ENCODE measurements at regions of chr1 and their contacts with region 1.

Region 1: DNA sequence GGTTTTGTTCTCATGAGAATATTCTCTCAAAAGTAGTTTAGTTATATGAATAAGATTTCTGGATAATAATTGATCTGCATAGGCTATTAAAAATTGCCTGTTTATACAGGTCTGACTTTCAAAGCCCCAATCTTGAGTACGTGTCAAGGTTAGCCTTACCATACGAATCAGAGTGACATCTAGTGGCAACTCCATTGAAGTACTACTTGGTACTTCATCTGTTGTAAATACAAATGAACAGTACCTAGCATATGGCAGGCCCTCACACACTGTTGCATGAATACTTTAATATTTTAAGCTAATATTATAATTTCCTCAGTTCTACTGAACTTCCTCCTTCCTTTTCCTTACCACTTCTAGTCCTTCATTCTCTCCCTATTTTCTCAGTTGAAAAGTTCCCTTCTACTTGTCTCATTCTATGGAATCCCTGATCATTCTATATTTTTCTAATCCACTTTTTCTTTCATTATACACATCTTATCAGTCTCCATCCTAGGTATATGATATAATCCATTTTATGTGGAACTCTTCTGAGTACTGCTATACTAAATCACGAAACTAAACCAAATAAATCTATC is 101.2 kb downstream of the AKT3 start:
- DNase-seq: no peak
- H3K4me3 Mint-ChIP-seq: no peak overlapping the region
- H3K27ac Mint-ChIP-seq: no peak overlapping the region
- H3K4me1 Mint-ChIP-seq: no peaks in the 10 kb centered on the region
- H3K27me3 Mint-ChIP-seq: no peaks in the 10 kb centered on the region

Region 2: GRCh38 chr1:243482141-243483022 is 266.4 kb before region 1 on chr1:
- intact Hi-C with region 1: loop called (anchors 5 kb)
- DNase-seq: no peak
- H3K4me3 Mint-ChIP-seq: peak overlapping the region; percentile 26
- H3K27ac Mint-ChIP-seq: no peak overlapping the region
- H3K4me1 Mint-ChIP-seq: peaks cover 14% of the 10 kb centered on the region
- H3K27me3 Mint-ChIP-seq: no peaks in the 10 kb centered on the region

Region 3: DNA sequence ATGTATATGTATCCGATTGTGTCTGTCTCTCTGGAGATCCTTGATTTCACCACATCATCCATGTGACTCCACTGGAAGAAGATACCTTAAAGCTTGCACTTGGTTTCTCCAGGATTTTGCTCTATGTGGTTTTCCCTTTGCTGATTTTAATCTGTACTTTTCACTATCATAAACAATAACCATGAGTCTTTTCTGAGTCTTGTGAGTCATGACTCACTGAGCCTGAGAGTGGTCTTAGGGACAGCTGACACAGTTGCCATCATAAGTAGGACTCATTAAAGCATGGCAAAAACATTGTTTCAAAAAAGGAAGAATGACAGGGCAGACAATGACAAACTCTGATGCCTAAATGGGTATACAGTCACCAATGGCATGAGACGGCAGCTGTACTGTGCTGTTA is 125.0 kb before region 1 on chr1:
- intact Hi-C with region 1: no loop called
- DNase-seq: no peak
- H3K4me3 Mint-ChIP-seq: no peak overlapping the region
- H3K27ac Mint-ChIP-seq: no peak overlapping the region
- H3K4me1 Mint-ChIP-seq: peaks cover 12% of the 10 kb centered on the region
- H3K27me3 Mint-ChIP-seq: no peaks in the 10 kb centered on the region

Region 4: GRCh38 chr1:243672539-243673074 is 76.2 kb before region 1 on chr1:
- intact Hi-C with region 1: no loop called
- DNase-seq: no peak
- H3K4me3 Mint-ChIP-seq: no peak overlapping the region
- H3K27ac Mint-ChIP-seq: no peak overlapping the region
- H3K4me1 Mint-ChIP-seq: no peaks in the 10 kb centered on the region
- H3K27me3 Mint-ChIP-seq: no peaks in the 10 kb centered on the region

Region 5: GRCh38 chr1:243713470-243714186 is 35.2 kb before region 1 on chr1:
- intact Hi-C with region 1: no loop called
- DNase-seq: no peak
- H3K4me3 Mint-ChIP-seq: no peak overlapping the region
- H3K27ac Mint-ChIP-seq: no peak overlapping the region
- H3K4me1 Mint-ChIP-seq: peaks cover 8% of the 10 kb centered on the region
- H3K27me3 Mint-ChIP-seq: no peaks in the 10 kb centered on the region

Region 6: DNA sequence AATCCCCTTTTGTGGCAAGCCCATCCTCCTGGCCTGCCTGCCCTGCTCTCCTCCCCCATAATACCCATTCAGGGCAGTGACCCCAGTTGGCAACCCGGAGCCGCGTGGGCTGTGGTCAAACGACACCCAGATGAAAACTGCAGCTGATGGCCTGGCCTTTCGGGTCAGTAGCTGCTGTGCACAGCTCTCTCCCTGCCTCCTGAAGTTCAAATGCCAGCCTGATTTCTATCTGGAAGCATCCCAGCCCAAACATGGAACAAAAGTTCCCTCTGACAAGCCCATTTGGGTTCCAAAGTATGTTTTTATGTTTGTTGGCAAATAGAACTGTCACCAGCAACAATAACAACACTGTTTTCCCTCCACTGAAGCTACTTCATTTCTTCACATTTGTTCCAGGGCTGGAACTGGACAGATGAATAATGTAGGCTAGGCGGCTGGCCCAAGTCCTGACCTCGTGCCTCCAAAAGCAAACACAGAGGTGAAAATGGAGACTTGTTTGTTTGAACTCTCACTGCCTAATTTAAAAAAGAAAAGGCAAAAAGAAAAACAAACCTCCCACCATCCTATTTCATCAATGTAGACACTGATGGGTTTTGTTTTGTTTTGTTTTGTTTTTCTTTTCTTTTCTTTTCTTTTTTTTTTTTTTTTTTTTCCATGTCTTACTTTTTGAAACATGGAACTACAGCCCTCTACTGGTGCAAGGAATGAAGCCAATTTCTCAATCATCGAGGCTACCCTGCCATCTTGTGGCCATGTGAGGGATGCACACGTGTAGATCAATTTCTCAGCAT is 523.9 kb after region 1 on chr1:
- intact Hi-C with region 1: loop called (anchors 5 kb)
- DNase-seq: peak; percentile 48
- H3K4me3 Mint-ChIP-seq: no peak overlapping the region
- H3K27ac Mint-ChIP-seq: no peak overlapping the region
- H3K4me1 Mint-ChIP-seq: peaks cover 6% of the 10 kb centered on the region
- H3K27me3 Mint-ChIP-seq: peaks cover 4% of the 10 kb centered on the region

Region 7: GRCh38 chr1:244296447-244296846 is 547.7 kb after region 1 on chr1:
- intact Hi-C with region 1: no loop called
- DNase-seq: no peak
- H3K4me3 Mint-ChIP-seq: no peak overlapping the region
- H3K27ac Mint-ChIP-seq: no peak overlapping the region
- H3K4me1 Mint-ChIP-seq: peaks cover 6% of the 10 kb centered on the region
- H3K27me3 Mint-ChIP-seq: peaks cover 2% of the 10 kb centered on the region